ENCODE measurements at regions of chr9 and their contacts with region 1.

Region 1: GRCh38 chr9:33721674-33722358 is 73.5 kb upstream of the PRSS3 start:
- DNase-seq: peak; percentile 59
- H3K4me3 ChIP-seq: no peak overlapping the region
- H3K27ac ChIP-seq: no peak overlapping the region
- H3K27me3 ChIP-seq: peaks cover 9% of the 10 kb centered on the region
- CTCF ChIP-seq: peak; percentile 99

Region 2: DNA sequence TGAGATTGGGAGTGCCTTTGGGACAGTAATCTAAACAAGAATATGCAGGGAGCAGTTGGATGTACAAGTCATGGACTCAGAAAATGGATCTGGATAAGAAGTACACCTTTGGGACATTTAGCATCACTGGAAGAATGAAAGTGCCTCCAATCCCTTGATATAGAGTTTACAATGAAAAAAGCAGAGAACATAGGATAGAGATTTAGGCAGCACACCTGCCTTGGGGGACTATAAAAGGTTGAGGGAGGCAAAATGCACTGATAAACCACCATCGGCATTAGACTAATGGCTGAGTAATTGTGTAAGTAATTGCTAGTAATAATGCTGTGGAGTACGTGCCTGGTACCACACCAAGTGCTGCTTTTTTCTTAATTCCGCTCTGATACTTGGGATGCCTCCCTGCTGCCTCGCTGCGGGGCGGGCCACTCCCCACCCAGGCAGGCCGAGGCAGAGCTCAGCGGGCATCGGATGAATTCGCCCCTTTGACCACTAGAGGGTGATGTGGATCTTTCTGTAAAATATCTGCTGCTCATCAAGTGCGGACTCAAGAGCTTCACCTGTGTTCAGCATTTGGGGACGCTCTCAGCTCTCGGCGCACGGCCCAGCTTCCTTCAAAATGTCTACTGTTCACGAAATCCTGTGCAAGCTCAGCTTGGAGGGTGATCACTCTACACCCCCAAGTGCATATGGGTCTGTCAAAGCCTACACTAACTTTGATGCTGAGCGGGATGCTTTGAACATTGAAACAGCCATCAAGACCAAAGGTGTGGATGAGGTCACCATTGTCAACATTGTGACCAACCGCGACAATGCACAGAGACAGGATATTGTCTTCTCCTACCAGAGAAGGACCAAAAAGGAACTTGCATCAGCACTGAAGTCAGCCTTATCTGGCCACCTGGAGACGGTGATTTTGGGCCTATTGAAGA is 97.9 kb before region 1 on chr9:
- CTCF ChIA-PET with region 1: interaction called, 275 read pairs
- POLR2A ChIA-PET with region 1: no interaction called
- DNase-seq: peak; percentile 33
- H3K4me3 ChIP-seq: no peak overlapping the region
- H3K27ac ChIP-seq: no peak overlapping the region
- H3K27me3 ChIP-seq: peaks cover 2% of the 10 kb centered on the region
- CTCF ChIP-seq: peak; percentile 78

Region 3: DNA sequence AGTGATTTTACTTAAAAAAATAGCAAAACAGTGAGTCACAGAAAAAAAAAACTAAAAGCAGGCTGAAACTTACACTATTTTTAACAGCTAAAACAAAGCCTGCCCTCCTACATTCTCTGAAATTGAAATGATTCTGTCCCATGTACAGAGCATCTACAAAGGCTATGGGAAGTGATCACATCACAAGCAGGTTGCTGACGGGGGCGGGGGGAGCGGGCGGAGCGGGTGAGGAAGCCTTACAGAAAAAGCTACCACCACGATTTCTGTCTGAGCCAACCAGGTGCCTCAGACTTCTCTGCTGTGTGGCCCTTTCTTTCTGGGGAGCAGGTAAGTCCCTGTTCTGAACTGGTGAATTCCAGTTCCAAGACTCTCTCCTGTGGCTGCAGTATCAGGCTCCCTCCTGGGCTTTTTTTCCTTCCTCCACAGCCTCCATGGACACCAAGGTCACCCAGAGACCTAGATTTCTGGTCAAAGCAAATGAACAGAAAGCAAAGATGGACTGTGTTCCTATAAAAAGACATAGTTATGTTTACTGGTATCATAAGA is 92.9 kb before region 1 on chr9:
- CTCF ChIA-PET with region 1: interaction called, 275 read pairs
- POLR2A ChIA-PET with region 1: no interaction called
- DNase-seq: no peak
- H3K4me3 ChIP-seq: no peak overlapping the region
- H3K27ac ChIP-seq: no peak overlapping the region
- H3K27me3 ChIP-seq: peaks cover 30% of the 10 kb centered on the region
- CTCF ChIP-seq: no peak

Measured in AG04450 (cell line).